Stomach (tissue), 19 donors: ENCODE measurements at regions of chr19 and their contacts with region 1.

Region 1: GRCh38 chr19:34345947-34346351 is 19.0 kb upstream of the GPI start:
- DNase-seq: peak; percentile 64 to 69
- H3K4me3 ChIP-seq: no peak overlapping the region
- H3K27ac ChIP-seq: no peak overlapping the region
- H3K4me1 ChIP-seq: peaks cover 0 to 12% (median 2%) of the 10 kb centered on the region in 4 donors
- H3K27me3 ChIP-seq: no peaks in the 10 kb centered on the region
- CTCF ChIP-seq: peak in 5 of 7 experiments; percentile 27 to 72 (median 50)
- EP300 ChIP-seq: no peak
- POLR2A ChIP-seq: no peak

Region 2: GRCh38 chr19:33998739-33999345 is 347.1 kb before region 1 on chr19:
- intact Hi-C with region 1: no loop called
- DNase-seq: peak in 1 of 2 donors; percentile 2
- H3K4me3 ChIP-seq: no peak overlapping the region
- H3K27ac ChIP-seq: no peak overlapping the region
- H3K4me1 ChIP-seq: no peaks in the 10 kb centered on the region
- H3K27me3 ChIP-seq: peaks cover 0 to 3% (median 0%) of the 10 kb centered on the region in 3 donors
- CTCF ChIP-seq: peak in 3 of 7 experiments; percentile 17 to 40 (median 34)
- EP300 ChIP-seq: no peak
- POLR2A ChIP-seq: no peak

Region 3: DNA sequence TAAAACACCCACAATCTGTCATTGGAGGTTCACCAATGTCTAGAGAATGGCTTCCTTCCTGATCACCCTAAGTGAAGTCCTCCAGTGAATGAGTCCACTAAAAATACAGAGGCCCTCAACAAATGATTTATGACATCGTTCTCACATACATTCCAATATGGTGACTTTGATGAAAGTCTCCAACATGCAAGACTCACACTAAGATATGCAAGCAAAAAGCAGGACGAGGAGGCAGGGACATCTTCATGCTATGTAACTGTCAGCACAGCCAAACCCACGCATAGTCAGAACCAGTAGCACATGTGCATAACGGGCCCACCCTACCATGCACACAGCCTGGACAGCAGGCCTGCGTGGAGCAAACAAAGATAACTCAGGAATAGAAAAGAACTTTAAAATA is 190.3 kb before region 1 on chr19:
- intact Hi-C with region 1: no loop called
- DNase-seq: no peak
- H3K4me3 ChIP-seq: no peak overlapping the region
- H3K27ac ChIP-seq: no peak overlapping the region
- H3K4me1 ChIP-seq: no peaks in the 10 kb centered on the region
- H3K27me3 ChIP-seq: no peaks in the 10 kb centered on the region
- CTCF ChIP-seq: no peak
- EP300 ChIP-seq: no peak
- POLR2A ChIP-seq: no peak

Region 4: GRCh38 chr19:34220472-34221063 is 125.4 kb before region 1 on chr19:
- intact Hi-C with region 1: loop called (anchors 10 kb)
- DNase-seq: peak; percentile 72 to 82
- H3K4me3 ChIP-seq: no peak overlapping the region
- H3K27ac ChIP-seq: no peak overlapping the region
- H3K4me1 ChIP-seq: peaks cover 9 to 35% (median 20%) of the 10 kb centered on the region in 4 donors
- H3K27me3 ChIP-seq: no peaks in the 10 kb centered on the region
- CTCF ChIP-seq: peak in 5 of 7 experiments; percentile 41 to 79 (median 53)
- EP300 ChIP-seq: no peak
- POLR2A ChIP-seq: no peak

Region 5: DNA sequence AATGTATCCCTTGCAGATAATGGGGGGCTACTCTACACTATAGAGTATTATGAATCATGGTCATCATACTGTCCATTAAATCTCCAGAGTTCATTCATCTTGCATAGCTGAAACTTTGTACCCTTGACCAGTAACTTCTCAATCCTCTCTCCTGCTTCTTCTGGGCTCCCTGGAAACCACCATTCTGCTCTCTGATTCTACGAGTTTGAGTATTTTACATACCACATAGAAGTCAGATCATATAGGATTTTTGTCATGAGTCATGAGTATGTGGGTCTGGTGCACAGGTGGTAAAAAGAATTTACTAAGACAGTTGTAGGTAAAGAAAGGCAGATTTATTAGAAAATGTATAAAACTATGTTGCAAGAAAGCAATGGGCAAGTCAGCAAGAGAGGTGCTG is 177.5 kb after region 1 on chr19:
- intact Hi-C with region 1: no loop called
- DNase-seq: no peak
- H3K4me3 ChIP-seq: no peak overlapping the region
- H3K27ac ChIP-seq: no peak overlapping the region
- H3K4me1 ChIP-seq: no peaks in the 10 kb centered on the region
- H3K27me3 ChIP-seq: peaks cover 0 to 6% (median 0%) of the 10 kb centered on the region in 3 donors
- CTCF ChIP-seq: no peak
- EP300 ChIP-seq: no peak
- POLR2A ChIP-seq: no peak